Thyroid gland (tissue), 4 donors: ENCODE measurements at regions of chr5 and their contacts with region 1.

Region 1: GRCh38 chr5:173293817-173294672 is 34.2 kb downstream of the STC2 start:
- DNase-seq: peak; percentile 76 to 84
- H3K4me3 ChIP-seq: no peak overlapping the region
- H3K27ac ChIP-seq: no peak overlapping the region
- H3K4me1 ChIP-seq: peaks cover 0 to 7% of the 10 kb centered on the region in 2 donors
- H3K27me3 ChIP-seq: no peaks in the 10 kb centered on the region
- CTCF ChIP-seq: peak; percentile 64 to 96 (median 85)
- POLR2A ChIP-seq: no peak

Region 2: GRCh38 chr5:172902497-172903200 is 391.4 kb before region 1 on chr5:
- intact Hi-C with region 1: no loop called
- DNase-seq: peak; percentile 98 to 99
- H3K4me3 ChIP-seq: no peak overlapping the region
- H3K27ac ChIP-seq: peak overlapping the region; percentile 93 to 99 (median 99)
- H3K4me1 ChIP-seq: peaks cover 43 to 66% of the 10 kb centered on the region in 2 donors
- H3K27me3 ChIP-seq: no peaks in the 10 kb centered on the region
- CTCF ChIP-seq: peak in 4 of 6 experiments; percentile 57 to 68 (median 64)
- POLR2A ChIP-seq: peak in 1 of 2 donors; percentile 58

Region 3: GRCh38 chr5:173331956-173332479 is 38.0 kb after region 1 on chr5:
- intact Hi-C with region 1: loop called (anchors 1 kb)
- DNase-seq: peak; percentile 91 to 92
- H3K4me3 ChIP-seq: no peak overlapping the region
- H3K27ac ChIP-seq: no peak overlapping the region
- H3K4me1 ChIP-seq: peaks cover 23 to 29% of the 10 kb centered on the region in 2 donors
- H3K27me3 ChIP-seq: no peaks in the 10 kb centered on the region
- CTCF ChIP-seq: peak; percentile 87 to 98 (median 96)
- POLR2A ChIP-seq: no peak

Region 4: DNA sequence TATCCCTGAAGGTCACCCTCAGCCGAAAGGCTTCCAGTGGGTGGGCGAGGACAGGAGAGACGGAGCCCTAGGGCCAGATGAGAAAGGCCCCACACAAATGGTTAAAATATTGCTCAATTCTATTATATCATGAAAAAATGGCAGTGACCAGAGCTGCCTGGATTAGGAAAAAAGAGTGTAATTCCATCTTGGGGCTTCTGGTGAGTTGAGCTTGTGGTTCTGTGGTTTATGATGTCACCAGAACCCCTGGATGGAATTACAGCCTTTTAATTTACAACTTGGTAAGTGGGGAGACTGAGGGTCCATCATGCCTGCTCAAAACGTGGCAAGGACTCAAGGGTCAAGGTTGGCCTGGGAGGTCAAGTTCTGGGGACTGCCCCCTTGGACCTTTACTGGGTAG is 89.7 kb after region 1 on chr5:
- intact Hi-C with region 1: no loop called
- DNase-seq: no peak
- H3K4me3 ChIP-seq: no peak overlapping the region
- H3K27ac ChIP-seq: no peak overlapping the region
- H3K4me1 ChIP-seq: no peaks in the 10 kb centered on the region
- H3K27me3 ChIP-seq: no peaks in the 10 kb centered on the region
- CTCF ChIP-seq: no peak
- POLR2A ChIP-seq: no peak

Region 5: GRCh38 chr5:173573126-173573960 is 279.3 kb after region 1 on chr5:
- intact Hi-C with region 1: loop called (anchors 5 kb)
- DNase-seq: peak; percentile 60 to 74
- H3K4me3 ChIP-seq: no peak overlapping the region
- H3K27ac ChIP-seq: no peak overlapping the region
- H3K4me1 ChIP-seq: peaks cover 0 to 7% of the 10 kb centered on the region in 2 donors
- H3K27me3 ChIP-seq: no peaks in the 10 kb centered on the region
- CTCF ChIP-seq: peak; percentile 74 to 98 (median 92)
- POLR2A ChIP-seq: no peak